ENCODE measurements at regions of chr6 and their contacts with region 1.

Region 1: GRCh38 chr6:16319813-16320532 is 81.6 kb downstream of the GMPR start:
- DNase-seq: peak; percentile 27 to 90 (median 68)
- ATAC-seq: peak; percentile 58
- H3K4me3 ChIP-seq: peak overlapping the region; percentile 17 to 33
- H3K4me3 Mint-ChIP-seq: peak overlapping the region; percentile 67
- H3K27ac ChIP-seq: peak overlapping the region; percentile 69 to 85
- H3K27ac Mint-ChIP-seq: peak overlapping the region; percentile 94
- H3K4me1 ChIP-seq: peaks cover 73% of the 10 kb centered on the region
- H3K4me1 Mint-ChIP-seq: peaks cover 75% of the 10 kb centered on the region
- H3K27me3 ChIP-seq: no peaks in the 10 kb centered on the region
- H3K27me3 Mint-ChIP-seq: no peaks in the 10 kb centered on the region
- CTCF ChIP-seq: no peak

Region 2: DNA sequence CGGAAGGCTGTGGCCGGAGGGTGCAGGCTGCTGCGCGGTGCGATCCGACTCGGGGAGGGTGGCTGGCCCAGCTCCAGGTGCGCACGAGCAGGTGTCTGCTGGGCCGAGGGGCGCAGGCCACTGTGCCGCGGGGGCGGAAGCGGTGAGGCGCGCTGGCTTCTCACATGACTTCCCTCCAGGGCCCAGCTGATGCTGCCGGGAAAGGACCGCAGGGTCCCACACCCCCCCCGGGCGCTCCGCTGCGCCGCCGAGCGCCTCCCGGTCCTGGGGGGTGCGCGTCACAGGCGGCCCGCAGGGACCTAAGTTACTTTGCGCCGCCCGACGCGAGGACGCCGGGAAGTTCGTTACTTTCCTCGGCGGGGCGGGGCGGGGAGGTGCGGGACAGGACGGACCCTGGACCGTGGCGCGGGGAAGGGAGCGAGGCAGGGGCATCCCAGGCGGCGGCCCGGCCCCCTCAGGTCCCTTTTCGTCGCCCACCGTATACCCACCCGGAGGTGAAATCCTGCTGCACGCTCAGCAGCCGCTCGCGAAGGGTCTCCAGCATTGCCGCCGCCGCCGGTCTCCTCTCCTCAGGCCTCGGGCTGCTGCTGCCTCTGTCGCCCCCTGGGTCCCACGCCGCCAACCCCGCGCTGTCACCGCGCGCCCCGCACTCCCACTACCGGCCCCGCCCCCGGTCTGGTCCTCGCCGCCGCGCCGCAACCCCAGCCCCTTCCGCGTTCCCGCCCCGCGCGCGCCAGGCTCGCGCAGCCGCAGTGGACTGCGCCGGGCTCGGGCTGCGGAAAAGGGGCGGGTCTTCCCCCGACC is 657.4 kb before region 1 on chr6 and contains the start of gene DTNBP1:
- CTCF ChIA-PET with region 1: no interaction called
- POLR2A ChIA-PET with region 1: no interaction called
- intact Hi-C with region 1: loop called in 1 of 2 experiments (anchors 10 kb)
- DNase-seq: peak; percentile 58 to 90 (median 82)
- ATAC-seq: peak; percentile 73
- H3K4me3 ChIP-seq: peak within 1 kb of the TSS; percentile 67 to 76
- H3K4me3 Mint-ChIP-seq: peak within 1 kb of the TSS; percentile 83
- H3K27ac ChIP-seq: peak within 1 kb of the TSS; percentile 55 to 73
- H3K27ac Mint-ChIP-seq: peak within 1 kb of the TSS; percentile 73
- H3K4me1 ChIP-seq: peaks cover 7% of the 10 kb centered on the region
- H3K4me1 Mint-ChIP-seq: peaks cover 41% of the 10 kb centered on the region
- H3K27me3 ChIP-seq: no peaks in the 10 kb centered on the region
- H3K27me3 Mint-ChIP-seq: peaks cover 2% of the 10 kb centered on the region
- CTCF ChIP-seq: no peak
- total RNA-seq, gene DTNBP1: 12.3 to 12.6 TPM

Region 3: GRCh38 chr6:16227637-16228036 is 92.3 kb before region 1 on chr6:
- CTCF ChIA-PET with region 1: no interaction called
- POLR2A ChIA-PET with region 1: no interaction called
- intact Hi-C with region 1: no loop called
- DNase-seq: no peak
- ATAC-seq: no peak
- H3K4me3 ChIP-seq: no peak overlapping the region
- H3K4me3 Mint-ChIP-seq: no peak overlapping the region
- H3K27ac ChIP-seq: no peak overlapping the region
- H3K27ac Mint-ChIP-seq: no peak overlapping the region
- H3K4me1 ChIP-seq: no peaks in the 10 kb centered on the region
- H3K4me1 Mint-ChIP-seq: no peaks in the 10 kb centered on the region
- H3K27me3 ChIP-seq: no peaks in the 10 kb centered on the region
- H3K27me3 Mint-ChIP-seq: peaks cover 8% of the 10 kb centered on the region
- CTCF ChIP-seq: no peak

Region 4: GRCh38 chr6:16238057-16238962 is 81.7 kb before region 1 on chr6 and contains the start of gene GMPR:
- CTCF ChIA-PET with region 1: interaction called, 3 read pairs
- POLR2A ChIA-PET with region 1: no interaction called
- intact Hi-C with region 1: loop called in 1 of 2 experiments (anchors 5 kb)
- DNase-seq: peak; percentile 35 to 88 (median 73)
- ATAC-seq: peak; percentile 96
- H3K4me3 ChIP-seq: peak within 1 kb of the TSS; percentile 64 to 66
- H3K4me3 Mint-ChIP-seq: peak within 1 kb of the TSS; percentile 91
- H3K27ac ChIP-seq: no peak within 1 kb of the TSS
- H3K27ac Mint-ChIP-seq: no peak within 1 kb of the TSS
- H3K4me1 ChIP-seq: peaks cover 8% of the 10 kb centered on the region
- H3K4me1 Mint-ChIP-seq: peaks cover 22% of the 10 kb centered on the region
- H3K27me3 ChIP-seq: no peaks in the 10 kb centered on the region
- H3K27me3 Mint-ChIP-seq: peaks cover 16% of the 10 kb centered on the region
- CTCF ChIP-seq: no peak
- total RNA-seq, gene GMPR: 0.41 to 0.86 TPM

Region 5: GRCh38 chr6:16471222-16471909 is 151.4 kb after region 1 on chr6:
- CTCF ChIA-PET with region 1: no interaction called
- POLR2A ChIA-PET with region 1: no interaction called
- intact Hi-C with region 1: no loop called
- DNase-seq: peak in 3 of 9 experiments; percentile 33 to 59 (median 35)
- ATAC-seq: no peak
- H3K4me3 ChIP-seq: no peak overlapping the region
- H3K4me3 Mint-ChIP-seq: no peak overlapping the region
- H3K27ac ChIP-seq: no peak overlapping the region
- H3K27ac Mint-ChIP-seq: peak overlapping the region; percentile 69
- H3K4me1 ChIP-seq: peaks cover 22% of the 10 kb centered on the region
- H3K4me1 Mint-ChIP-seq: peaks cover 55% of the 10 kb centered on the region
- H3K27me3 ChIP-seq: no peaks in the 10 kb centered on the region
- H3K27me3 Mint-ChIP-seq: no peaks in the 10 kb centered on the region
- CTCF ChIP-seq: no peak

Region 6: DNA sequence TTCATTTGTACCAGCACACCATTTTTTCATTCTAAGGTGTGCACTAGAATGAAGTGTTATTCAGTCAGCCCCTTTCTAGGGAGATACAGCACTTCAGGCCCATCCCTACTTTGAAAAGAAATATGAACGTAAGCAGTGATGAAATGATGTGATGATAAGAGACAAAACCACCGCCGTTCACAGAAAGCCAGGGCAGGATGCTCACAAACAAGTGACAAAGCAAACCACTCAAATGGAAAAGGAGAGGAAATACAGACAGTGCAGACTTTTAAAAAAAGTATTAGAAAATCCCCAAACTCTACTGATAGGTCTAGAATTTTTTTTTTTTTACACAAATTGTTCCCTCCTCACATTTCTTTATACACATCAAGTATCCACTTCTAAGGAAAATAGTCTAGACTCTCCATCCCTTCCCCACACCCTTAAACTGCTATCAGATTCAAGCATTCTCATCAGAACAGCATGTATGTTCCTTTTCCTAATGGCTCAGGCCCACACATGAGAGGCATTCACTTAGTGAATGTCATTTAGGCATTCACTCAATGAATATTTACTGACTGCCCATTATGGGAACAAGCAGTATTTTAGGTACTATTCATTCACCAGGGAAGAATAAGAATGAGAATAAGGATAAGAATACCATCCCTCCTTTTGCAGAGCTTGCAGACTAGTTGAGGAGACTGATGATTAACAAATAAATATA is 161.9 kb after region 1 on chr6:
- CTCF ChIA-PET with region 1: interaction called, 3 read pairs
- POLR2A ChIA-PET with region 1: no interaction called
- intact Hi-C with region 1: loop called (anchors 1 to 2 kb)
- DNase-seq: peak; percentile 30 to 95 (median 61)
- ATAC-seq: peak; percentile 81
- H3K4me3 ChIP-seq: no peak overlapping the region
- H3K4me3 Mint-ChIP-seq: peak overlapping the region; percentile 52
- H3K27ac ChIP-seq: peak overlapping the region; percentile 28 to 83
- H3K27ac Mint-ChIP-seq: peak overlapping the region; percentile 95
- H3K4me1 ChIP-seq: peaks cover 61% of the 10 kb centered on the region
- H3K4me1 Mint-ChIP-seq: peaks cover 77% of the 10 kb centered on the region
- H3K27me3 ChIP-seq: no peaks in the 10 kb centered on the region
- H3K27me3 Mint-ChIP-seq: no peaks in the 10 kb centered on the region
- CTCF ChIP-seq: no peak

Region 7: GRCh38 chr6:17081860-17082508 is 762.0 kb after region 1 on chr6:
- CTCF ChIA-PET with region 1: no interaction called
- POLR2A ChIA-PET with region 1: no interaction called
- intact Hi-C with region 1: no loop called
- DNase-seq: no peak
- ATAC-seq: no peak
- H3K4me3 ChIP-seq: no peak overlapping the region
- H3K4me3 Mint-ChIP-seq: no peak overlapping the region
- H3K27ac ChIP-seq: no peak overlapping the region
- H3K27ac Mint-ChIP-seq: no peak overlapping the region
- H3K4me1 ChIP-seq: no peaks in the 10 kb centered on the region
- H3K4me1 Mint-ChIP-seq: no peaks in the 10 kb centered on the region
- H3K27me3 ChIP-seq: peaks cover 0 to 2% of the 10 kb centered on the region in 2 experiments
- H3K27me3 Mint-ChIP-seq: peaks cover 12% of the 10 kb centered on the region
- CTCF ChIP-seq: no peak

Region 8: GRCh38 chr6:17610835-17611234 is 1290.9 kb after region 1 on chr6:
- CTCF ChIA-PET with region 1: no interaction called
- POLR2A ChIA-PET with region 1: no interaction called
- intact Hi-C with region 1: loop called in 1 of 2 experiments (anchors 10 kb)
- DNase-seq: no peak
- ATAC-seq: no peak
- H3K4me3 ChIP-seq: no peak overlapping the region
- H3K4me3 Mint-ChIP-seq: no peak overlapping the region
- H3K27ac ChIP-seq: peak overlapping the region in 1 of 2 experiments; percentile 9
- H3K27ac Mint-ChIP-seq: no peak overlapping the region
- H3K4me1 ChIP-seq: no peaks in the 10 kb centered on the region
- H3K4me1 Mint-ChIP-seq: peaks cover 11% of the 10 kb centered on the region
- H3K27me3 ChIP-seq: no peaks in the 10 kb centered on the region
- H3K27me3 Mint-ChIP-seq: no peaks in the 10 kb centered on the region
- CTCF ChIP-seq: no peak

Region 9: GRCh38 chr6:18264219-18264922 is 1944.4 kb after region 1 on chr6 and contains the start of gene DEK:
- CTCF ChIA-PET with region 1: no interaction called
- POLR2A ChIA-PET with region 1: no interaction called
- intact Hi-C with region 1: loop called in 1 of 2 experiments (anchors 10 kb)
- DNase-seq: peak; percentile 59 to 90 (median 84)
- ATAC-seq: peak; percentile 66
- H3K4me3 ChIP-seq: peak within 1 kb of the TSS; percentile 67 to 79
- H3K4me3 Mint-ChIP-seq: peak within 1 kb of the TSS; percentile 90
- H3K27ac ChIP-seq: peak within 1 kb of the TSS; percentile 53 to 89
- H3K27ac Mint-ChIP-seq: peak within 1 kb of the TSS; percentile 95
- H3K4me1 ChIP-seq: peaks cover 33% of the 10 kb centered on the region
- H3K4me1 Mint-ChIP-seq: peaks cover 52% of the 10 kb centered on the region
- H3K27me3 ChIP-seq: no peaks in the 10 kb centered on the region
- H3K27me3 Mint-ChIP-seq: no peaks in the 10 kb centered on the region
- CTCF ChIP-seq: peak; percentile 45
- total RNA-seq, gene DEK: 39.5 to 47.5 TPM

Measured in CD8-positive, alpha-beta T cell (primary cell).